Cardiac septum (tissue), 1 donor: ENCODE measurements at regions of chr12 and their contacts with region 1.

Region 1: DNA sequence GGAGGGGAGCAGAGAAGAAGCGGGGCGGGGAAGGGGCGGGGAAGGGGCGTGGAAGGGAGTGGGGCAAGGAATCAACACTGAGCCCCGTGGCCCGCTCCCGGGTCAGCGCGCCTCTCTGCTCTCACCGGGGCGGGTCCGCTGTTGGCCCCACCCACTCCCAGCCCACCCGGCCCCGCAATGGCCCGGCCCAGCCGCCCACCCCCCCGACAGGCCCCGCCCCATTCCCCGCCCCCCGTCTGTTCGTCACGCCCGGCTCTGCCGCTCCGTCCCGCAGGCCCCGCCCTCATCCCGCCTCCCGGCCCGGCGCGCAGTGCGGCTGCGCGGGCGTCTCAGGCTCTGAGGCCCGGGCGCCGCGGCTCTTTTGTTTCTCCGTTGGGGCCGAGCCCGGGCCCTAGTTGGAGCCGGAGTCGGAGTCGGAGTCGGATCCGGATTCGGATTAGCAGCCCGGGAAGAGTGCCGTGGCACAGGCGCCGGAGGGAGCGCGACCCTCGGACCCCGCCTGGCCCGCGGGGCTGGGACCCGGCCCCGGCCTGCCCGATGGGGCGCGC is at the start of gene ULK1:
- DNase-seq: peak; percentile 97
- total RNA-seq, gene ULK1: 43.7 TPM

Region 2: DNA sequence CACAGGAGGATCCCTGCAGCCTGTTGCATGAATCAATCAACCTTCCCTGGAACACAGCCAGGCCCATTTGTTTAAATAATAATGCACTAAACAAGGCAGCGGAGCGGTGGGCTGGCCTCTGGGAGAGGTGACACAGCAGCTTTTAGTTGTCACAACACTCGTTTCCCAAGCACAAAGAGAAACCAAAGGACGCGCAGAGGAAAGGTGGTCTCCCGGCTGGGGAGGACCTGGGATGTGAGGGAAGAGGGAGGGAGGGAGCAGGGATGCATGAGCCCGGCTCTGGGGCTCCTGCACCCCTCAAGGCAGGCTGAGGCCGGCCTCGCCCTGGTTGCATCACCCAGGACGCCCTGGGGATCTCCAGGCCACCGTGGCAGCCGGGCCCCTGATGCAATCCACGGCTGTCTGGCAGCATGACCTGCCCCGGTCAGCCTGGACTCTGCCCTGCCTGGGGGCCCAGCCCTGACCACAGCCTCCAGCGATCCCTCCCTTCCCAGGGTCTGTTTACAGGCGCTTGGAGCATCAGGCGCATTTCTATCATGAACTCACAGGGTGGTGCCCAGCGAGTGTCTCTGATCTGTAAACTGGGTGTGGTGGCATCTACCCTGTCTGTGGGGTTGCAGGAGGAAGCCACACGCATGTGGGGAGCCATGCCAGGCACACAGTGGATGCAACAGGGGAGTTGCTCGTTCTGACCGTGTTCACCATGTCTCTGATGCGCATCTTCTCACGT is 33.7 kb before region 1 on chr12:
- intact Hi-C with region 1: no loop called
- DNase-seq: peak; percentile 89

Region 3: GRCh38 chr12:131912518-131913294 is 18.3 kb after region 1 on chr12:
- intact Hi-C with region 1: loop called (anchors 2 kb)
- DNase-seq: peak; percentile 95

Region 4: GRCh38 chr12:131928711-131929580 is 34.6 kb after region 1 on chr12 and contains the start of gene PUS1:
- intact Hi-C with region 1: loop called (anchors 2 kb)
- DNase-seq: peak; percentile 97
- total RNA-seq, gene PUS1: 9.9 TPM

Region 5: GRCh38 chr12:131949431-131950181 is 55.2 kb after region 1 on chr12 and contains the start of gene EP400:
- intact Hi-C with region 1: loop called (anchors 1 kb)
- DNase-seq: peak; percentile 97
- total RNA-seq, gene EP400: 23.1 TPM

Region 6: DNA sequence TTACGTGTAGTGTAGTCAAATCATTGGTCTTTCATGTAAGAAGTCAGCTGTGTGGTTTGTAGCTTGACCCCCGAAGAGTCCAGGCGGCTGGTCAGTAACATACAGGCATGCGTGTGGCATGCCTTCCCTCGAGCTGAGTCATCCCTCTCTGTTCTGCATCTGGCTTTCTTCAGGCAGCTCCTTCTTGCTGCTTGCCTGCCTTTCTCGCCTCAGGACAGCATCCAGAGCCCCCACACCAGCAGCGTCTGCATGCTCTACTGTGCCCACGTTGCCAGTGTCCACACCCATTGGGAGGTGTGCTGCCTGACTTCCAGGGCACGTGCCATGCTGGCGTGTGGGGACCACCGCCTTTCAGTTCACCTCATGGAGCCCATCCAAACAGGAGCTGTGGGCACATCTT is 152.2 kb after region 1 on chr12:
- intact Hi-C with region 1: no loop called
- DNase-seq: peak; percentile 69

Region 7: GRCh38 chr12:132189378-132190011 is 295.1 kb after region 1 on chr12:
- intact Hi-C with region 1: no loop called
- DNase-seq: peak; percentile 96